CD8-positive, alpha-beta T cell (primary cell): ENCODE measurements at regions of chr15 and their contacts with region 1.

Region 1: DNA sequence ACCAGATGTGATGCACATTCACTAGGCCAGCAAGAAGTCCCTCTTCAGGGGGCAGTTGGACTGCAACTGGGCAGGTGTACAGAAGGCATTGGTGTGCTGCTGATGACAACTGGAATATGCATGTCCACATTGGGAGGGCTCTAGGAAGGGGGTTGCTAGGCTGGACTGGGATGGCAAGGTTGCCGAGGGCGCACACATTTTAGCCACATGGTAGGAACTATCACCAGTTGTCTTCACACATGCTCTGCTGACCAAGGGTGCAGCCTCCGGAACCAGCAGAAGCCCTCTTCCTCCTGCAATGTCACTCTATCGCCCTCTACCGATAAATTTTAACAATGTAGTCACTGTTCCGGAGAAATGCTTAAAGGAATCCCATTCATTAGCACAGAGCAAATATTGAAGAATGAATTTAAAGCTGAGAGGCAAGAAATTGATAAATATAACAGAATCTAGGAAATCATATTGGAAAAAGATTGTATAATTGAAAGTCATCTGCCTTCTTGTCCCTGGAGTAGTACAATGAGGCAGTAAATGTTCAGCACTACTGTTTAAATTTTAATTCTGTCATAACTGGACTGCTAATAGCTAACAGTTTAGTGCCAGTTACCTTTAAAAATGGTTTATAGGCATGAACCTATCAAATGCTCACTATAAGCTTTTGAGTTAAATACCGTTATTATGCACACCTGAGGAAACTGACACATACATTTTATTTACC is 22.6 kb upstream of the LYSMD4 start:
- DNase-seq: peak; percentile 8 to 76 (median 24)
- ATAC-seq: peak; percentile 71
- H3K4me3 ChIP-seq: no peak overlapping the region
- H3K4me3 Mint-ChIP-seq: no peak overlapping the region
- H3K27ac ChIP-seq: no peak overlapping the region
- H3K27ac Mint-ChIP-seq: no peak overlapping the region
- H3K4me1 ChIP-seq: peaks cover 4% of the 10 kb centered on the region
- H3K4me1 Mint-ChIP-seq: peaks cover 3% of the 10 kb centered on the region
- H3K27me3 ChIP-seq: no peaks in the 10 kb centered on the region
- H3K27me3 Mint-ChIP-seq: no peaks in the 10 kb centered on the region
- CTCF ChIP-seq: peak; percentile 89

Region 2: GRCh38 chr15:99104788-99105513 is 650.9 kb before region 1 on chr15 and contains the start of gene SYNM:
- CTCF ChIA-PET with region 1: no interaction called
- POLR2A ChIA-PET with region 1: no interaction called
- intact Hi-C with region 1: loop called in 1 of 2 experiments (anchors 5 kb)
- DNase-seq: peak in 2 of 9 experiments; percentile 49 to 60
- ATAC-seq: peak; percentile 15
- H3K4me3 ChIP-seq: peak within 1 kb of the TSS in 1 of 2 experiments; percentile 34
- H3K4me3 Mint-ChIP-seq: peak within 1 kb of the TSS; percentile 61
- H3K27ac ChIP-seq: peak within 1 kb of the TSS in 1 of 2 experiments; percentile 43
- H3K27ac Mint-ChIP-seq: peak within 1 kb of the TSS; percentile 45
- H3K4me1 ChIP-seq: no peaks in the 10 kb centered on the region
- H3K4me1 Mint-ChIP-seq: peaks cover 19% of the 10 kb centered on the region
- H3K27me3 ChIP-seq: peaks cover 0 to 5% of the 10 kb centered on the region in 2 experiments
- H3K27me3 Mint-ChIP-seq: peaks cover 33% of the 10 kb centered on the region
- CTCF ChIP-seq: no peak
- total RNA-seq, gene SYNM: 3.3 to 3.9 TPM

Region 3: GRCh38 chr15:99282121-99282520 is 473.7 kb before region 1 on chr15:
- CTCF ChIA-PET with region 1: interaction called, 11 read pairs
- POLR2A ChIA-PET with region 1: no interaction called
- intact Hi-C with region 1: loop called (anchors 1 kb)
- DNase-seq: no peak
- ATAC-seq: no peak
- H3K4me3 ChIP-seq: no peak overlapping the region
- H3K4me3 Mint-ChIP-seq: no peak overlapping the region
- H3K27ac ChIP-seq: no peak overlapping the region
- H3K27ac Mint-ChIP-seq: no peak overlapping the region
- H3K4me1 ChIP-seq: no peaks in the 10 kb centered on the region
- H3K4me1 Mint-ChIP-seq: peaks cover 14% of the 10 kb centered on the region
- H3K27me3 ChIP-seq: no peaks in the 10 kb centered on the region
- H3K27me3 Mint-ChIP-seq: no peaks in the 10 kb centered on the region
- CTCF ChIP-seq: no peak

Region 4: DNA sequence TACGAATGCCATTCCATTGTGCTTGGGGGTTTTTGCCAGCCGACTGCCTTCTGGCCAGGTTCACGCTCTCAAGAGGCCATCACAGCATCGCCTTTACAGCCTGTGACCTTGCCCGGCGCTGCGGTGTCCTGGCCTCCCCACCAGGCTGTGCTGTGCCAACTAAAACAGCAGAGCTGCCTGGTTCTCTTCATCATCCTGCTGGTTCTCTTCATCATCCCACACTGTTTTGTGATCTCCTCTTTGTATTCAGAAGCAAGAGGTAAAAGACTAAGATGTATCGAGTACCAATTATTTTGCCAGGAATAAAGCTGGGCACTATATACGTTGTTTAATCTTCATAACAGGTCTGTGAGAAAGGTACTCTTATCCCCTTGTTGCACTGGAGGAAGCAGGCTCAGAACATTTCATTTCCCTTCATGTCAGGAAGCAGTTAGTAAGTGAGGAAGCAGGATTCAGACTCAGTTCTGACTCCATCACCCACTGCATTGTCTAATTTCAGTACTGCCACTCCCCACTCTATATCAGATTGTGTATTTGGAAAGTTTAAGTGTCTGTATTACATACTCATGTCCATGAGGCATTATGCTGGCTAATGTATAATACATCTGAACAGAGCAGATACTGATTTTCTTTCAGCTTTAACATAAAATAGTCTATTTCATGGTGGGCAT is 411.8 kb before region 1 on chr15:
- CTCF ChIA-PET with region 1: interaction called, 8 read pairs
- POLR2A ChIA-PET with region 1: no interaction called
- intact Hi-C with region 1: loop called (anchors 1 to 5 kb)
- DNase-seq: peak; percentile 12 to 76 (median 53)
- ATAC-seq: peak; percentile 79
- H3K4me3 ChIP-seq: no peak overlapping the region
- H3K4me3 Mint-ChIP-seq: no peak overlapping the region
- H3K27ac ChIP-seq: no peak overlapping the region
- H3K27ac Mint-ChIP-seq: no peak overlapping the region
- H3K4me1 ChIP-seq: no peaks in the 10 kb centered on the region
- H3K4me1 Mint-ChIP-seq: peaks cover 5% of the 10 kb centered on the region
- H3K27me3 ChIP-seq: no peaks in the 10 kb centered on the region
- H3K27me3 Mint-ChIP-seq: no peaks in the 10 kb centered on the region
- CTCF ChIP-seq: peak; percentile 62

Region 5: DNA sequence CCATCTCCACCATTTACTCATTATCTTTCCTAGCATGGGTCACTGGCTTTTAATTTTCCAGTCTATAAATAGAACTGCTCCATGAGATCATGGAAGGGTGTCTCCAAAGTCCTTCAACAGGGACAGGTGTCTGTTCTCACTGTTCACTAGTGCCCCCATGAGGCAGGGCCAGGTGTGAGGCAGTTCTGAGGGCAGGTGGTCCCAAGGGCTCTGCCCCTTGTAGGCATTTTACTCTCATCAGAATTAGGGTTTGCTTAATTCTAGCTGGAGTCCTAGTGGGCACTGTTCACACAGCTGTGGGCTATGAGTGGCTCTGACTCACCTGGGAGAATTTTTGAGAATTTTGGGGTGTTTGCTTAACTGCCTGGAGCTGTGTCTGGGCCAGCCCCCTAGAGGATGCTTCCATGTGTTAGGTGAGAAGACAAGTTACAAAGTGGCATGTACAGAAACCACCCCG is 225.4 kb after region 1 on chr15:
- CTCF ChIA-PET with region 1: no interaction called
- POLR2A ChIA-PET with region 1: no interaction called
- intact Hi-C with region 1: no loop called
- DNase-seq: no peak
- ATAC-seq: no peak
- H3K4me3 ChIP-seq: no peak overlapping the region
- H3K4me3 Mint-ChIP-seq: no peak overlapping the region
- H3K27ac ChIP-seq: no peak overlapping the region
- H3K27ac Mint-ChIP-seq: no peak overlapping the region
- H3K4me1 ChIP-seq: no peaks in the 10 kb centered on the region
- H3K4me1 Mint-ChIP-seq: no peaks in the 10 kb centered on the region
- H3K27me3 ChIP-seq: no peaks in the 10 kb centered on the region
- H3K27me3 Mint-ChIP-seq: no peaks in the 10 kb centered on the region
- CTCF ChIP-seq: no peak